Mucosa of descending colon (tissue), 3 donors: ENCODE measurements at regions of chr1 and their contacts with region 1.

Region 1: DNA sequence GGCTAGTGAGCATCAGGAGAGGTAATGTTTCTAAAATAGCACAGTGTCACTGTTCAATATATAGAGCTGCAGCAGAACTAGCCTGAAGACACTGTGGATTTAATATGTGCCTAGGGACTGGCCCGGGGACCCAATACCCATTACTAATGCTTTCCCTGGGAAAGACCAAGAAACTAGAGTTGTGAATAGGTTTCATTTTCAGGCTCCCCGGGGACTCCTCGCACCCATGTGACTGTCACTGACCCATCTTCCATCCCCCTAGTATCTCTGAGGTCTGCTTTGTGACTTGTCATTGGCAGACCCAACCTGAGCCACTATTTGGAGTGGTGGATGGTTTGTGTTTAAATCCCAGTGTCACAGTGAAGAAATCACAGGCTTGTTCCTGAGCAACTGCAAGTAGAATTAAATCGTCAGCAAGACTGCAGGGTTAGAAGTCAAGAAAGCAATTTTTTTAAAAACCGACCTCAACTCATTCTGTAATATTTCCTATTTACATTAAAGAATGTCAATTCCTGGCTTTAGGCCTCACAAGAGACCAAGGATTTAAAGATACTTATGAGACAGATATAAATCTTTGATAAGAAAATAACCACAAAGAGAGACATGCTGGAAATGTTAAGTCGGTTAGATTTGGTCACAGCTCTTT is 130.0 kb upstream of the TNR start:
- DNase-seq: no peak
- ATAC-seq: no peak
- H3K4me3 ChIP-seq: no peak overlapping the region
- H3K4me1 ChIP-seq: no peaks in the 10 kb centered on the region
- CTCF ChIP-seq: no peak

Region 2: DNA sequence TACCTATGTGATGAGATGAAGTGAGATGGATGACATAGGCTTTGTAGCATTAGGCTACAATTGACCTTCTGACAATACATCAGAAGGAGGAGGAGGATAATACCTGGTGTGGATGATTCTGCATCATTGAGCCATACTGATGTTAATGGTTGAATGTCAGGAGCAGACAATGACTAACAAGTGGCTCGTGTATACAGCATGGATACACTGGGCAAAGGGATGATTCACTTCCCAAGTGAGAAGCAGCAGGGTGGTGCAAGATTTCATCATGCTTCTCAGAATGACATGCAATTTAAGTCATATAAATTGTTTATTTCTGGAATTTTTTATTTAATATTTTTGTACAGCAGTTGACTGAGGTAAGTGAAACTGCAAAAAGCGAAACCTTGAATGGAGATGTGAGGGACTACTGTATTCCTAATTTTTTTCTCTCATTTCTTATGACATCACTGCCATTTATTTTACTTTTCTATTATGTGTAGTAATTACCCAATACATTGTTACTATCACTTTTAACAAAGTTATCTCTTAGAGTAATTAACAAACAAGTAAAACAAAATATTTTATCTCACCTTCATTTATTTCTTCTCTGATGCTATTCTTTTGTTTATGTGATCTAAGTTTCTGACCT is 368.1 kb after region 1 on chr1:
- intact Hi-C with region 1: loop called in 1 of 2 experiments (anchors 5 kb)
- DNase-seq: no peak
- ATAC-seq: peak; percentile 41
- H3K4me3 ChIP-seq: no peak overlapping the region
- H3K4me1 ChIP-seq: no peaks in the 10 kb centered on the region
- CTCF ChIP-seq: no peak